ENCODE measurements at regions of chr9 and their contacts with region 1.

Region 1: DNA sequence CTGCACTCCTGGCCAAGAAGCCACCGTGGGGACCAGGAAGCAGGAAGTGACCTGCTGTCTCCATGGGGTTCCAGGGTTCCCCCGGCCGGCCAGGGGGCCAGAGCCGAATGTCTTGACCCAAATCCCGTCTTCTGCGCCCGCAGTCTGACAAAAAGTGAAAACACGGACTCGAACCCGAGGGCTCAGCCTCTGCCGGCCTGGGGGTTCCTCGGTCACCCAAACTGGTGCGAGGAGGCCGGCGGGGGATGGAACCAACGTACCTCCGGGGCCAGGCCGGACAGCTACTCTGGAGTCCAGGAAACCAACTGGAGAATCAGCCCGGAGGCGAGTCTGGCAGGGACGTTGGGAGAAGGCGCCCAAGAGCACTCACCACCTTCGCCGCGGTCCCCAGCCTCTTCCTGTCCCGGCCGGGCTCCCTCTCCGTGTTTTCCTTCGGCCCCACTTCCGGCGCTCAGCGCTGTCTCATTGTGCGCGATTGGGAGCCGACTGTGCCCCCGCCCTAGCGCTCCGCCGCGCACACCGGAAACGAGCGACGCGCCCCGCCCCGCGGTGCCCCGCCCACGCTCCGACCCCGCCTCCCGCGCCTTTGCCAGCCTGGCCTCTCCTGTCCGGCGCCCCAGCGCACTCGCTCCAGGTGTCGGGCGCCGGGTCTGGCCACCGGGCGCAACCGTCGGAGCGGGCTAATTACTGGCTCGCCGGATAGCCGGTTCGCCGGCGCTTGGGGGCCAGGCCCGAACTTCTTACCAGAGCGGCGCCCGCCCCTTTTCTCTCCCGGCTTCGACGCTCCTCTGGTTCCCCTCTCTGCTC is at the start of gene TUT7:
- DNase-seq: peak; percentile 98
- H3K4me3 ChIP-seq: peak within 1 kb of the TSS; percentile 92
- H3K27ac ChIP-seq: peak within 1 kb of the TSS; percentile 90
- H3K4me1 ChIP-seq: peaks cover 16% of the 10 kb centered on the region
- H3K27me3 ChIP-seq: no peaks in the 10 kb centered on the region
- CTCF ChIP-seq: no peak
- total RNA-seq, gene TUT7: 18.4 and 22.7 TPM in 2 replicates

Region 2: GRCh38 chr9:86282077-86282978 is 71.9 kb before region 1 on chr9 and contains the start of gene ISCA1:
- CTCF ChIA-PET with region 1: no interaction called
- POLR2A ChIA-PET with region 1: no interaction called
- intact Hi-C with region 1: loop called (anchors 5 kb)
- DNase-seq: peak; percentile 97
- H3K4me3 ChIP-seq: peak within 1 kb of the TSS; percentile 86
- H3K27ac ChIP-seq: peak within 1 kb of the TSS; percentile 94
- H3K4me1 ChIP-seq: peaks cover 18% of the 10 kb centered on the region
- H3K27me3 ChIP-seq: no peaks in the 10 kb centered on the region
- CTCF ChIP-seq: no peak
- total RNA-seq, gene ISCA1: 36.4 and 42.5 TPM in 2 replicates